ENCODE measurements at regions of chr14 and their contacts with region 1.

Region 1: DNA sequence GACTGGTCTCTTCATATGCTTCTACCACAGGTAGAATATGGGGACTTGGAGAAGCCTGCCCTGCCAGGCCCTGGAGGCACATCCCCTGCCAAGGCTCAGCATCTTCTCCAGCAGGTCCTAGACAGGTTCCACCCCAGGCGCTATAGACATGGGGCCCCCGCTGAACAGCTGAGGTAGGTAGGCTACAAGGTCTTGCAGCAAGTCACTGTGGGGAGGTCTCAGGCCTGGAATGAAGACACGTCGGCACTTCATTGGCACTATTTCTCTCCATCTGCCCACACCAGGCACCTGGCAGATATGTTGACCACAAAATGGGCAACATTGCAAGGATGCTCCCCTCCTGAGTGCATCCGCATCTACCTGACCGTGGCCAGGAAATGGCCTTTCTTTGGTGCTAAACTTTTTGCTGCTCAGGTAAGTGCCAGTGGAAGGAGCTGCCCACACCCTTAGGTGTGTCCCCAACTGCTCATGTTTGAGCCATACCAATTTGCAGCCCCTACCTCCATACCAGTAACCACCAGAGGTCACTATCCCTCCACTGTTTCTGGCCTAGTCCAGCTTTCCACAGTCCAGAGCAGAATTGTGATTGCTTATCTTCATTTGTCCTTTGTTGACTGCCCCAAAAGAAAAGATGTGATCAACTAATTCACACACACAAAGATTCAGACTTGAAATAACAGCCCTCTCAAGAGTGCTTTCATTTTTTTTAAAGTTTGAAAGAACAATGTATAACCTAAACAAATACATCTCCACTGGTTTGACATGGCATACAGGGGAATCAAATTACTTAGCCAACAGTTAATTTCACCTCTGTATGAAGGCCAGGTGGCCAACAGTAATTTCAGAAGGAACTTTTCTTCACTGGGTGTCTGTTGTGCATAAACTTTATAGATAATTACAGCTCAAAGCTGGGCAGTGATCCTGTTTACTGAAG is 16.1 kb downstream of the PIGH start:
- DNase-seq: peak; percentile 62 to 73
- H3K4me3 ChIP-seq: no peak overlapping the region
- H3K4me3 Mint-ChIP-seq: no peak overlapping the region
- H3K27ac Mint-ChIP-seq: no peak overlapping the region
- H3K4me1 ChIP-seq: peaks cover 13% of the 10 kb centered on the region
- H3K4me1 Mint-ChIP-seq: no peaks in the 10 kb centered on the region
- H3K27me3 ChIP-seq: no peaks in the 10 kb centered on the region
- H3K27me3 Mint-ChIP-seq: no peaks in the 10 kb centered on the region
- CTCF ChIP-seq: peak; percentile 78 to 82

Region 2: DNA sequence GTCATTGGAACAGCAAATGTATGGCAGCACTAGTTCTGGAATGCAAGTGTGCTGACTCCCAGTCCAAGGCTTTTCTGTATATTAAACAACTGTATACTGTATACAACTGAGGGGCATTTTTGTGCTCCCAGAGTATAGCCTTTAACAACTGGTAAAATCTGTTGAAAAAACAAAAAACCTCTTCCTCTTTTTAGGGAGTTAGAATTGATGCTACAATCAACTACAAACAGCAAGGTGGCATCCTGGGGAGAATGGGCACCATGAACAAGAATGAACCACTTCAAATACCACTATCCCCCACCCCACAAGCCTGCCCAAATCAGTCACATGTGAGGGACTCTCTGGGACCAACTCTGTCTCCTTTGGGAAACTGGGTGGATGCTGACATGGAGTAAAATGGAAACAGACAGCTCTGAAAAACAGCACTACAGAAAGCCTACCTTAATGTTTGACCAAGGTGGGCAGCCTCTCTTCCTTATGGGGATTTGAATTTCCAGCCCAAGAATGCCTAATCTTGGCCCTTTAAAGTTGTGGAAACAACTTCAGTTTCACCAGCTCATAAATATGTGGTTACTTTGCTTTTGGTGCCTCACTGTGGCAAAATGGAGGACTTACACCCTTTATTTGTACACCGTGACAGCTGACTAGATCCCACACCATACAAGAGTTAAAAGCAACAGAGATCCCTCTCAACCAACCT is 82.9 kb after region 1 on chr14:
- CTCF ChIA-PET with region 1: interaction called, 13 read pairs
- POLR2A ChIA-PET with region 1: no interaction called
- intact Hi-C with region 1: loop called (anchors 1 kb)
- DNase-seq: peak in 1 of 2 experiments; percentile 45
- H3K4me3 ChIP-seq: no peak overlapping the region
- H3K4me3 Mint-ChIP-seq: no peak overlapping the region
- H3K27ac Mint-ChIP-seq: no peak overlapping the region
- H3K4me1 ChIP-seq: no peaks in the 10 kb centered on the region
- H3K4me1 Mint-ChIP-seq: no peaks in the 10 kb centered on the region
- H3K27me3 ChIP-seq: no peaks in the 10 kb centered on the region
- H3K27me3 Mint-ChIP-seq: no peaks in the 10 kb centered on the region
- CTCF ChIP-seq: peak; percentile 58 to 62

Region 3: DNA sequence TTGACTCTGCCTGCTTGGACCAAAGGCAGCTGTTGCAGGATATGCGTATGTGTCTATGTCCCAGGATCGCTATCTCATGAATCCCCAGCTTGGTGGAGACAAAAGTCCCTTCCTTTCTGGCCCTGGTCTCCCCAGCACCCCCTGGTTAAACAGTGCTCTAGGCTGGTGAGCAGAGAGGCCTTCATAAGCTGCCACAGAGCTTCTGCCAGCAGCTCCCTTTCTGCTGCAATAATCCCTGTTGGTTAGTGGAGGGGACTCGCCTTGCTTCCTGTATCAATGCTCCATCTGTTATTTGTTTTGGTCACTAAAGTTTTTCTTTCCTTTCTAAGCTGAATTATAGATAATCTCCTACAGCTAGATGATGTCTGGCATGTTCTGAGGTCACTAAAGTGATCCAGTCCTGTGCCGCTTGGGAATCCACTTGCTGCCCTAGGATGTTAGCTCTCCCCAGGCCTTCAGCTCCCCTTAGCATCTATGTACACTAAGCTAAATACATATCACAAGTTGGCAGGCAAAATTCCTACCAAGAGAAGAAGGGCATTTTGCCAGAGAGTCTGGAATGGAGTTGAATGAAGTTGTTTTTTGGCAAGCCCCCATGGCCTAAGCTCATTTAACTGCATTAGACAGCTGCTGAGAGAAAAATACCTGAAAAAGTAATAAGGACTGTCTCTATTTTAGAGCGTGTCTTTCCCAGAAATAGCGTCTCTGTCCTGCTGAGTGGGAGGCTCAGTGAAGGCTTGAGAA is 165.5 kb after region 1 on chr14:
- CTCF ChIA-PET with region 1: no interaction called
- POLR2A ChIA-PET with region 1: no interaction called
- intact Hi-C with region 1: no loop called
- DNase-seq: no peak
- H3K4me3 ChIP-seq: no peak overlapping the region
- H3K4me3 Mint-ChIP-seq: no peak overlapping the region
- H3K27ac Mint-ChIP-seq: peak overlapping the region; percentile 50
- H3K4me1 ChIP-seq: no peaks in the 10 kb centered on the region
- H3K4me1 Mint-ChIP-seq: no peaks in the 10 kb centered on the region
- H3K27me3 ChIP-seq: no peaks in the 10 kb centered on the region
- H3K27me3 Mint-ChIP-seq: no peaks in the 10 kb centered on the region
- CTCF ChIP-seq: no peak

Region 4: DNA sequence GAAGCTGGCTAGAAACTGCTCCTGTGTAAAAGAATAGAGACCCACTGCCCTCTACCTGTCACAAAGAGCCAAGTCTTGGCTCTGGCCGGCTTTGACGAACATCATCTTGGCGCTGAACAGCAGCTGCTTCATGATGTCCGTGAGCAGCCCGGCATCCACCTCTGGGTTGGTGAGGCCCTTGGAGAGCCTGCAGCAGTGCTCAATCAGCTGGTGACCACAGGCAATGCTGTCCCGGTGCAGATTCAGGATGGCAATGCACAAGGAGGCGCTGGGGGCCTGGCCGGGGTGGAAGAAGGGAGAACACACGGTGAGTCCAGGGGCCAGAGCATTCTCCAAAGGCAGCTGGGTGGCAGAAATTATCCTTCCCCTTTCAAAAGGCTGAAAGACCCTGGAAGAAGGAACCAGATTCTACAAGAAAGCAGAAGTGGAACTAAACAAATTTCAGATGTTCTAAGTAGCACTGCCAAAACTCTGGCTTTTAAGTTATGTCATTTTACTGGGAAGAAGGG is 182.2 kb after region 1 on chr14:
- CTCF ChIA-PET with region 1: interaction called, 3 read pairs
- POLR2A ChIA-PET with region 1: no interaction called
- intact Hi-C with region 1: loop called (anchors 5 kb)
- DNase-seq: peak in 1 of 2 experiments; percentile 14
- H3K4me3 ChIP-seq: no peak overlapping the region
- H3K4me3 Mint-ChIP-seq: no peak overlapping the region
- H3K27ac Mint-ChIP-seq: no peak overlapping the region
- H3K4me1 ChIP-seq: peaks cover 28% of the 10 kb centered on the region
- H3K4me1 Mint-ChIP-seq: peaks cover 32% of the 10 kb centered on the region
- H3K27me3 ChIP-seq: no peaks in the 10 kb centered on the region
- H3K27me3 Mint-ChIP-seq: no peaks in the 10 kb centered on the region
- CTCF ChIP-seq: peak; percentile 19 to 24